ENCODE measurements at regions of chr19 and their contacts with region 1.

Region 1: DNA sequence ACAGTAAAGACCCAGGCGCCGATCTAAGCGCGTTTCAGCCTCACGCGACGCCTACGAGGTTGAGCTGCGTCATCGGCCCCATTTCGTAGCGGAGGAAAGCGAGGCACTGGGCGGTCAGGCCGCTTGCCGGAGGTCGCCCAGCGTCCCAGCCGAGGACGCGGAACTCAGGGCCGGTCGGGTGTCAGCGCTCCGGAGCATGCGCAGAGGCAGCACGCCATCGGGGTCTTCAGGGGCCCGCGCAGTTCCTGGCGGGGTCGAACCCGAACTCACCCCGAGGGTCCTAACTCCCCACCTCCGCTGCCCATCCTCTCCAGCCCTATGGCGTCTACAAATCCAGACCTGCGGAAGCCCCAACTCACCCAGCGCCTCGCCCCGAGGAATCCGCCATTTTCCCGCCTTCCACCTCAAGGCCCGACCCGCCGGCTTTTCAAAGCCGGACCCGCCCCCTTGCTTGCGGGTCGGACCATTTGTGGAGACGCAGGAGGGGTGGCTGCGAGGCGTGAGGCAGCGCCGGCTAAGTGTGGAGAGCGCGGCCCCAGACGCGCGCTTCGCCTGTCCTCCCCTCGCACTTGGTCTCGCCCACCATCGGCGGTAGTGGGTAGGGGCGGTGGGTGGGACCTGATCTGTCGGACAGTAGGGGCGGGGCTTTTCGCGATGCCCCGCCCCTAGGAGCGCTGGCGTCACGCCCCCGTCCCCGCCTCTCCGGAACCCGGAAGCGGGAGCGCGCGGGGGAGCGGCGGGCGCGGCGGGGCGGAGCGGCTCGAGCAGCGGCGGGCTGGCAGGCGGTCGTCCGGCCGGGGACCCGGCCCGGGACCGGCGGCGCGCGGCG is at the starts of genes HAUS8 and MYO9B:
- DNase-seq: peak; percentile 97 to 99
- H3K4me3 ChIP-seq: peak within 1 kb of the TSS; percentile 86
- H3K27ac ChIP-seq: peak within 1 kb of the TSS; percentile 47
- H3K4me1 ChIP-seq: peaks cover 46% of the 10 kb centered on the region
- H3K27me3 ChIP-seq: no peaks in the 10 kb centered on the region
- CTCF ChIP-seq: no peak
- total RNA-seq, gene HAUS8: 26.5 and 30.8 TPM in 2 replicates
- total RNA-seq, gene MYO9B: 81.2 and 103 TPM in 2 replicates

Region 2: DNA sequence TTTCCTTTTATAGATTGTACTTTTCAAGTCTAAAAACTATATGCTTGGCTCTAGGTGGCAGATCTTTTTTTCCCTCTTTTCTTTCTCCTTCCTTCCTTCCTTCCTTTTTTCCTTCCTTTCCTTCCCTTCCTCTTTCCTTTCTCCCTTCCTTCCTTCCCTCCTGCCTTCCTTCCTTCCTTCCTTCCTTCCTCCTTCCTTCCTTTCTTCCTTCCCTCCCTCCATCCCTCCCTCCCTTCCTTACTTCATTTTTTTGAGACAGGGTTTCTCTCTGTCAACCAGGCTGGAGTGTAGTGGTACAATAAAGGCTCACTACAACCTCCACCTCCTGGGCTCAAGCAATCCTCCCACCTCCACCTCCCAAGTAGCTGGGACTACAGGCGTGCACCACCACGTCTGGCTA is 138.3 kb before region 1 on chr19:
- CTCF ChIA-PET with region 1: interaction called, 20 read pairs
- POLR2A ChIA-PET with region 1: no interaction called
- intact Hi-C with region 1: no loop called
- DNase-seq: no peak
- H3K4me3 ChIP-seq: no peak overlapping the region
- H3K27ac ChIP-seq: no peak overlapping the region
- H3K4me1 ChIP-seq: no peaks in the 10 kb centered on the region
- H3K27me3 ChIP-seq: no peaks in the 10 kb centered on the region
- CTCF ChIP-seq: no peak

Region 3: GRCh38 chr19:17052439-17053210 is 22.6 kb before region 1 on chr19:
- CTCF ChIA-PET with region 1: no interaction called
- POLR2A ChIA-PET with region 1: no interaction called
- intact Hi-C with region 1: no loop called
- DNase-seq: peak; percentile 57 to 61
- H3K4me3 ChIP-seq: no peak overlapping the region
- H3K27ac ChIP-seq: no peak overlapping the region
- H3K4me1 ChIP-seq: peaks cover 12% of the 10 kb centered on the region
- H3K27me3 ChIP-seq: no peaks in the 10 kb centered on the region
- CTCF ChIP-seq: peak; percentile 89

Region 4: DNA sequence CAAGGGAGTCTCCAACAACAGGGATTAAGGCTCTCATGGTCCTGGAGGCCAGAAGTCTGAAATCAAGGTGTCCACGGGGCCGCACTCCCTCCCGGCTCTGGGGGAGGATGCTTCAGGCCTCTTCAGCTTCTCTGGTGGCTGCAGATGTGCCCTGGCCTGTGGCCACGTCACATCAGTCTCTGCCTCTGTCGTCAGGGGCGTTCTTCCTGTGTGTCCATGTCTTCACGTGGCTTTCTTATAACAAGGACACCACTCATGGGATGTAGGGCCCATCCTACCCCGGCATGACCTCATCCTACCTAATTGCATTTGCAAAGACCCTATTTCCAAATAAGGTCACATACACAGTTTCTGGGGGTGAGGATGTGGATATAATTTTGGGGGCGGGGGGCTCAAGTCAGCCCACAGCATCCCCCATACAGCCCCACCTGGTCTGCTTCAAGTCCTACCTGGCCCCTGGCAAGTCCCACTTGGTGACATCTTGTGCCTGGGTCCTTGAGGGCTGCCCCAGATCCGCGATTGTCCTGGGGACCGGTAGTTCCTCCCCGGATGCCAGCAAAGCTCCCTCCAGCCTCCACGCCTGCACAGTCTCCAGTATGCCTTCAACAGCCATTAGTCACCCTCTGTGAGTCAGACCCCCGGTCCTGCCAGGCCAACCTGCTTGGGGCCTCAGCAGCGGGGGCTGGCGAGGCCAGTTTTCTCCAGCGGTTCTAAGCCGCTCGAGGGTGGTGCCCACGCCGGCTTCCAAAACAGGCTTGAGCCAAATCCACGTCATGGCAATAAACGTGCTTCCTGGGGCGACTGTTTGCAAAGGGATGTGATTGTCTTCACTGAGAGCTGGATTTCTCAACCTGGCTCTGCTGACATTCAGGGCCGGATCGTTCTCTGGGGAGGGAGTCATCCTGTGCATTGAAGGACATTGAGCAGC is 32.5 kb after region 1 on chr19:
- CTCF ChIA-PET with region 1: no interaction called
- POLR2A ChIA-PET with region 1: no interaction called
- intact Hi-C with region 1: loop called (anchors 1 kb)
- DNase-seq: peak; percentile 94 to 99
- H3K4me3 ChIP-seq: no peak overlapping the region; the same call in 1 of the 2 replicates
- H3K27ac ChIP-seq: peak overlapping the region; percentile 68
- H3K4me1 ChIP-seq: peaks cover 24% of the 10 kb centered on the region
- H3K27me3 ChIP-seq: no peaks in the 10 kb centered on the region
- CTCF ChIP-seq: no peak

Region 5: GRCh38 chr19:17135001-17135853 is 60.0 kb after region 1 on chr19:
- CTCF ChIA-PET with region 1: no interaction called
- POLR2A ChIA-PET with region 1: no interaction called
- intact Hi-C with region 1: loop called (anchors 1 kb)
- DNase-seq: peak; percentile 95 to 98
- H3K4me3 ChIP-seq: peak overlapping the region; percentile 54
- H3K27ac ChIP-seq: peak overlapping the region; percentile 93
- H3K4me1 ChIP-seq: peaks cover 46% of the 10 kb centered on the region
- H3K27me3 ChIP-seq: no peaks in the 10 kb centered on the region
- CTCF ChIP-seq: no peak